H1 (cell line): ENCODE measurements at regions of chr4 and their contacts with region 1.

Region 1: DNA sequence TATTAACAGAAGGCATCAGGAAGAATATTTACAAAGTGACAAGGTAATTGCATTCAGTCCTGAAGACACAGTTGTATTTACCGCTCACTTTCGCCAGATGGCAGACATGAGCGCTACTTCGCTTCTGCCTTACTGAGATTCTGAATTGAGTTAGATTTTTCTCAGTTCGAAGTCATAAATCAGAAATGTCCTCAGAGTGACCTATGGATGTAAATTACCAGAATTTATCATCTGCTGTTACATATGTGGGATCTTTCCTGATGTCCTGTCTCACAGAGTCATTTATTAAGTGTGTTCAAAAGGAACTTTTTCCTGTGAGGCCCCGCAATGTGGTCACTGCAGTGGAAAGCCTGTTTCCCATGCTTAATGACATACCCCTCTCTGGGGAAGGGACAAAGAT is 97.3 kb upstream of the DCLK2 start:
- DNase-seq: peak; percentile 13 to 64
- H3K4me3 ChIP-seq: no peak overlapping the region
- H3K27ac ChIP-seq: no peak overlapping the region
- H3K4me1 ChIP-seq: no peaks in the 10 kb centered on the region
- H3K27me3 ChIP-seq: no peaks in the 10 kb centered on the region
- CTCF ChIP-seq: peak; percentile 2 to 82 (median 61)
- EP300 ChIP-seq: no peak
- POLR2A ChIP-seq: no peak
- RAD21 ChIP-seq: peak; percentile 71 to 77

Region 2: DNA sequence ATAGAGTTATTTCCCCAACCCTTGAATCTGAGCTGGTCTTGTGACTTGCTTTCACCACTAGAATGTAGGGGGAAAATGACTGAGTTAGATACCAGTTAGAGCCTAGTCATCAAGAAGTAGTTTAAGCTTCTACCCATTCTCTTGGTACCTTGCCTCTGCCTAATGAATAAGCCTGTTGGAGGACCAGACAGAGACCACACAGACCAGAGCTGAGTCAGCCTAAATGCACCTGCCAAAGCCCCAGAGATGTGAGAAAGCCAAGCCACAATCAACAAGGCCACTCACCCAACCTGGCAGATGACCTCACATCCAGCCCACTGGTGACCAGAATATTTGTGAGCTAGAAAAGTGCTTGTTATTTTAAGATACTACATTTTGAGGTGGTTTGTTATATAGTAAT is 12.1 kb after region 1 on chr4:
- CTCF ChIA-PET with region 1: interaction called, 15 read pairs
- POLR2A ChIA-PET with region 1: no interaction called
- DNase-seq: no peak
- H3K4me3 ChIP-seq: no peak overlapping the region
- H3K27ac ChIP-seq: no peak overlapping the region
- H3K4me1 ChIP-seq: no peaks in the 10 kb centered on the region
- H3K27me3 ChIP-seq: no peaks in the 10 kb centered on the region
- CTCF ChIP-seq: no peak
- EP300 ChIP-seq: no peak
- POLR2A ChIP-seq: no peak
- RAD21 ChIP-seq: no peak